ENCODE measurements at regions of chr3 and their contacts with region 1.

Region 1: DNA sequence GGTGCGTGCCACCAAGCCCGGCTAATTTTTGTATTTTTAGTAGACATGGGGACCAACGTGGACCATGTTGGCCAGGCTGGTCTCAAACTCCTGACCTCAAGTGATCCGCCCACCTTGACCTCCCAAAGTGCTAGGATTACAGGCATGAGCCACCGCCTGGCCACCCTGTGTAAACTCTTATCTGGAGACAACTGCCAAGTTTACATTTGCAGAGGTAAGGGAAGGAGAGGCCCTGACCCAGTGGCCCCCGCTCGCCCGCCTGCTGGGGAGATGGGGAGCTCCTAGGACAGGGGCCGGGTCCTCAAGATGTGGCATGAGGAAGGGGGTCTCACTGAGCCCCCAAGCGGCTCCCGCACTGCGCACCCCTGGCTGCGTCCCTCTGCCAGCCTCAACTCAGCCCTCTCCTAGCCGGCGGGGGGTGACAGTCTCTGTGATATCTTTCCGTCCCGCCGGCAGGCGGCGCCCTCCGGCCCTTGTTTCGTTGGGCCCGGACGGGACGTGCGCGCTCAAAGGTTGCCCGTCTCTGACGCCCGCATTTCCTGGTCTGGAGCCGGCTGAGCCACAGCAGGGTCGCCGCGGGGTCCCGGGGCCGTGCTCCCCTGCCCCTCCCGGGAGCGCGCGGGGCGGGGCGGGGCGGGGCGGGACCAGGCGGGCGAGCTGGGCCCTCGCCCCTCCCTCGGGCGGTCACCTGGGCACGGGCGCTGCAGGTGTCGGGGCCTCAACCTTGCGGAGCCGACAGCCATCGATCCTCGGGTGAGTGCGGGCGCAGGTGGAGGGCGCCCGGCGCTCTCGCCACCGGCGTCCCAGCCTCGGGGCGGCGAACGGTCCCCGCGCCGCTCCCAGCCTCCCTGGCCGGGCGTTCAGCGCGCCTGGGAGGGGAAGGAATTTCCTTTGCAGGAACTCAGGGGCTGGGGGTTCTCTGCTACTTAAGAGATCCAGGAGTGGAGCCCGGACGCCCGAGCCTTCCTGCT is at the start of gene GPR160:
- DNase-seq: peak; percentile 67 to 89 (median 74)
- ATAC-seq: peak; percentile 64
- H3K4me3 ChIP-seq: peak within 1 kb of the TSS; percentile 83
- H3K4me3 Mint-ChIP-seq: peak within 1 kb of the TSS; percentile 93
- H3K27ac ChIP-seq: peak within 1 kb of the TSS in 1 of 2 donors; percentile 41
- H3K27ac Mint-ChIP-seq: peak within 1 kb of the TSS; percentile 67
- H3K4me1 ChIP-seq: peaks cover 43% of the 10 kb centered on the region
- H3K4me1 Mint-ChIP-seq: peaks cover 43% of the 10 kb centered on the region
- H3K27me3 ChIP-seq: no peaks in the 10 kb centered on the region
- H3K27me3 Mint-ChIP-seq: no peaks in the 10 kb centered on the region
- CTCF ChIP-seq: peak; percentile 85
- total RNA-seq, gene GPR160: 5.7 TPM

Region 2: DNA sequence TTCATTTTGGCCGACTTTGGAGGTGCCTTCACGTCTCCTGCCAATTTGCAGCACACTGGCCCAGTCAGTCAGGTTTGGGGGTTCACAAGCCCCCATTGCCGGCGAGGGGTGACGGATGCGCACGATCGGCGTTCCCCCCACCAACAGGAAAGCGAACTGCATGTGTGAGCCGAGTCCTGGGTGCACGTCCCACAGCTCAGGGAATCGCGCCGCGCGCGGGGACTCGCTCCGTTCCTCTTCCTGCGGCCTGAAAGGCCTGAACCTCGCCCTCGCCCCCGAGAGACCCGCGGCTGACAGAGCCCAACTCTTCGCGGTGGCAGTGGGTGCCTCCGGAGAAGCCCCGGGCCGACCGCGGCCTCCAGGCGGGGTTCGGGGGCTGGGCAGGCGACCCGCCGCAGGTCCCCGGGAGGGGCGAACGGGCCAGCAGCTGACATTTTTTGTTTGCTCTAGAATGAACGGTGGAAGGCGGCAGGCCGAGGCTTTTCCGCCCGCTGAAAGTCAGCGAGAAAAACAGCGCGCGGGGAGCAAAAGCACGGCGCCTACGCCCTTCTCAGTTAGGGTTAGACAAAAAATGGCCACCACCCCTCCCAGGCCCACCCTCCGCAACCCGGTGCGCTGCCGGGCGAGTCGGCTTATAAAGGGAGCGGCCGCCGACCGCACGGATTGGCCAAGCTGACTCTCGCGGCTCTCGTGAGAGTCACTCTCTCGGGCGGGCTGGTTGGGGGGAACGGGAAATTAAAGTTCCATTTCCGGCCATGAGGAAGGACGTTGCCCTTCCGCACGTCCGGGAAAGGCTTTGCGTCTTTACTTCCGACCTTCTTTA is 273.1 kb before region 1 on chr3 and contains the start of gene TERC:
- CTCF ChIA-PET with region 1: interaction called, 5 read pairs
- POLR2A ChIA-PET with region 1: interaction called, 10 read pairs
- intact Hi-C with region 1: loop called (anchors 5 kb)
- DNase-seq: peak; percentile 82 to 98 (median 92)
- ATAC-seq: peak; percentile 82
- H3K4me3 ChIP-seq: peak within 1 kb of the TSS; percentile 93
- H3K4me3 Mint-ChIP-seq: peak within 1 kb of the TSS; percentile 98
- H3K27ac ChIP-seq: peak within 1 kb of the TSS; percentile 95 to 96
- H3K27ac Mint-ChIP-seq: peak within 1 kb of the TSS; percentile 97
- H3K4me1 ChIP-seq: peaks cover 27% of the 10 kb centered on the region
- H3K4me1 Mint-ChIP-seq: peaks cover 38% of the 10 kb centered on the region
- H3K27me3 ChIP-seq: no peaks in the 10 kb centered on the region
- H3K27me3 Mint-ChIP-seq: no peaks in the 10 kb centered on the region
- CTCF ChIP-seq: no peak
- total RNA-seq, gene TERC: 9.0 to 10.4 TPM

Region 3: GRCh38 chr3:170021083-170021482 is 16.7 kb before region 1 on chr3:
- CTCF ChIA-PET with region 1: no interaction called
- POLR2A ChIA-PET with region 1: interaction called, 16 read pairs
- intact Hi-C with region 1: no loop called
- DNase-seq: peak in 3 of 14 experiments; percentile 15 to 29 (median 24)
- ATAC-seq: peak; percentile 68
- H3K4me3 ChIP-seq: no peak overlapping the region
- H3K4me3 Mint-ChIP-seq: no peak overlapping the region
- H3K27ac ChIP-seq: no peak overlapping the region
- H3K27ac Mint-ChIP-seq: peak overlapping the region; percentile 10
- H3K4me1 ChIP-seq: peaks cover 5% of the 10 kb centered on the region
- H3K4me1 Mint-ChIP-seq: peaks cover 17% of the 10 kb centered on the region
- H3K27me3 ChIP-seq: no peaks in the 10 kb centered on the region
- H3K27me3 Mint-ChIP-seq: no peaks in the 10 kb centered on the region
- CTCF ChIP-seq: no peak

Region 4: DNA sequence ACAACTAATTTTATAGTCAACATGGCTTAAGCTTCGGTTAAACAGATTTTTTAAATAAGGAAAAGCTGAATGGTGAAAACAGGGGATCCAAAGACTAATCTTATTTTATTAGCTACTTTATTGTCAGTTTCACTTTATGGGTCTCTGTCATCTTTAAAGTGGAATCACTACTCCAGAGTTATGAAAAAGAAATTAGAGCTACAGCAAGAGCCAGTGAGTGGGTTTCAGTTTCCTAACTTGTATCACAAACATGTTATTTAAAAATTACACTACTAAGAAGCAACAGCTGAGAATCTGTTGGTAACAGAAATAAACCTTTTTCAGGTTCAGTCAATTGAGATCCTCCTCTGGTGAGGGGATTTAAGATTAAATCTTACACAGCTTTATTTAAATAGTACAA is 133.8 kb after region 1 on chr3:
- CTCF ChIA-PET with region 1: no interaction called
- POLR2A ChIA-PET with region 1: no interaction called
- intact Hi-C with region 1: loop called in 1 of 2 experiments (anchors 10 kb)
- DNase-seq: no peak
- ATAC-seq: no peak
- H3K4me3 ChIP-seq: no peak overlapping the region
- H3K4me3 Mint-ChIP-seq: peak overlapping the region; percentile 71
- H3K27ac ChIP-seq: no peak overlapping the region
- H3K27ac Mint-ChIP-seq: peak overlapping the region; percentile 82
- H3K4me1 ChIP-seq: peaks cover 24% of the 10 kb centered on the region
- H3K4me1 Mint-ChIP-seq: peaks cover 72% of the 10 kb centered on the region
- H3K27me3 ChIP-seq: no peaks in the 10 kb centered on the region
- H3K27me3 Mint-ChIP-seq: no peaks in the 10 kb centered on the region
- CTCF ChIP-seq: no peak

Region 5: GRCh38 chr3:170221924-170222646 is 184.3 kb after region 1 on chr3 and contains the start of gene PRKCI:
- CTCF ChIA-PET with region 1: no interaction called
- POLR2A ChIA-PET with region 1: interaction called, 3 read pairs
- intact Hi-C with region 1: loop called in 1 of 2 experiments (anchors 5 kb)
- DNase-seq: peak; percentile 79 to 96 (median 86)
- ATAC-seq: peak; percentile 84
- H3K4me3 ChIP-seq: peak within 1 kb of the TSS; percentile 72
- H3K4me3 Mint-ChIP-seq: peak within 1 kb of the TSS; percentile 95
- H3K27ac ChIP-seq: peak within 1 kb of the TSS; percentile 55 to 78
- H3K27ac Mint-ChIP-seq: peak within 1 kb of the TSS; percentile 93
- H3K4me1 ChIP-seq: peaks cover 15% of the 10 kb centered on the region
- H3K4me1 Mint-ChIP-seq: peaks cover 32% of the 10 kb centered on the region
- H3K27me3 ChIP-seq: no peaks in the 10 kb centered on the region
- H3K27me3 Mint-ChIP-seq: no peaks in the 10 kb centered on the region
- CTCF ChIP-seq: no peak
- total RNA-seq, gene PRKCI: 16.4 to 18.0 TPM